Colonic mucosa (tissue), 4 donors: ENCODE measurements at regions of chr15 and their contacts with region 1.

Region 1: GRCh38 chr15:61051569-61052031 is 177.5 kb downstream of the RORA start:
- DNase-seq: peak; percentile 25
- H3K4me3 ChIP-seq: no peak overlapping the region
- H3K27ac ChIP-seq: no peak overlapping the region
- H3K4me1 ChIP-seq: no peaks in the 10 kb centered on the region
- H3K27me3 ChIP-seq: no peaks in the 10 kb centered on the region
- CTCF ChIP-seq: peak; percentile 32

Region 2: GRCh38 chr15:60916679-60917460 is 134.7 kb before region 1 on chr15:
- intact Hi-C with region 1: loop called (anchors 10 kb)
- DNase-seq: peak; percentile 84
- H3K4me3 ChIP-seq: no peak overlapping the region
- H3K27ac ChIP-seq: peak overlapping the region; percentile 50
- H3K4me1 ChIP-seq: no peaks in the 10 kb centered on the region
- H3K27me3 ChIP-seq: no peaks in the 10 kb centered on the region
- CTCF ChIP-seq: peak; percentile 82

Region 3: GRCh38 chr15:60945196-60945595 is 106.4 kb before region 1 on chr15:
- intact Hi-C with region 1: no loop called
- DNase-seq: no peak
- H3K4me3 ChIP-seq: no peak overlapping the region
- H3K27ac ChIP-seq: no peak overlapping the region
- H3K4me1 ChIP-seq: no peaks in the 10 kb centered on the region
- H3K27me3 ChIP-seq: no peaks in the 10 kb centered on the region
- CTCF ChIP-seq: no peak